ENCODE measurements at regions of chr18 and their contacts with region 1.

Region 1: GRCh38 chr18:32018331-32019250 is at the start of gene RNF125:
- DNase-seq: peak; percentile 75 to 84
- ATAC-seq: peak; percentile 95 to 98 (median 96)
- H3K4me3 ChIP-seq: peak within 1 kb of the TSS; percentile 45 to 86 (median 68)
- H3K27ac ChIP-seq: peak within 1 kb of the TSS; percentile 67 to 89 (median 82)
- H3K4me1 ChIP-seq: peaks cover 0 to 44% (median 16%) of the 10 kb centered on the region in 9 donors
- H3K27me3 ChIP-seq: peaks cover 0 to 5% (median 0%) of the 10 kb centered on the region in 7 donors
- CTCF ChIP-seq: peak in 2 of 9 donors; percentile 10 to 14
- total RNA-seq, gene RNF125: 0.92 to 7.7 (median 2.4) TPM

Region 2: DNA sequence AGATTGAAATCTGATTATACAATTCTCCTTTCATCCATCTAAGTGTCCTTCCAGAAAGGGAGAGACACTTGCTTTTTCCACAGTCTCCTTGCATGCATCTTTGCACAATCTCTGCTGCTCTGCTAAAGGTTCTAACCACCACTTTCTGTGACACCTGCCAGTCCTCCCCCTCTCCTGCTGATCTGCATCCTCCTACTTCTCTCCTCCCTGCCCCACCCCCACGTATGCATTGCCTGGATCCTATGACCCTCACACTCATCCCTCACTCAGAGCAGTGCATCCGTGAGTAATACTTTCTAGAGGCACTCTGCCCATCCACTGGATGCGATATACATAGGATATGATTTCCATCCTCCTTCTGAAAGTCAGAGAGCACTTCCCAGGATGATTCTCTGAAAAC is 48.0 kb before region 1 on chr18:
- intact Hi-C with region 1: no loop called
- DNase-seq: no peak
- ATAC-seq: no peak
- H3K4me3 ChIP-seq: no peak overlapping the region
- H3K27ac ChIP-seq: no peak overlapping the region
- H3K4me1 ChIP-seq: no peaks in the 10 kb centered on the region
- H3K27me3 ChIP-seq: no peaks in the 10 kb centered on the region
- CTCF ChIP-seq: no peak

Region 3: DNA sequence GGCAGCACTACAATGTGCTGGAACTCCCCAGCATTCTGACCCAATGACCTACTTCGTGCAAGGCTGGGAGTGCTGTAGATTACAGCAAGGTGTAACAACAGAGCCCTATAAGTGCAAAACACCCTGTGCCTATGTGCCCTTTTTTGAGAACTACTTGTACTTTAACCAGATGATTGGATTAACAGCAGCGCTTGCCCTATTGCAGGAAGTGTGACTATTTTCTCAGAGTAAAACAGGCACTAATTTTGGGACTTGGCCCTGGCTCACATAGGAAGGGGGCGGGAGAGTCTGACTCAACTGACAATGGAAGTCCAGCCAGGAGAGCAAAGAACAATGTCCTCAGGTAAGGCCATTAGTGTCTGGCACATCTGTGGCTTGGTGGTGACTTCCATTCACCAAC is 35.6 kb before region 1 on chr18:
- intact Hi-C with region 1: loop called in 3 of 10 experiments (anchors 2 to 5 kb)
- DNase-seq: peak in 1 of 2 donors; percentile 11
- ATAC-seq: peak; percentile 67 to 95 (median 88)
- H3K4me3 ChIP-seq: no peak overlapping the region
- H3K27ac ChIP-seq: peak overlapping the region in 8 of 10 donors; percentile 12 to 73 (median 54)
- H3K4me1 ChIP-seq: peaks cover 0 to 30% (median 14%) of the 10 kb centered on the region in 9 donors
- H3K27me3 ChIP-seq: no peaks in the 10 kb centered on the region
- CTCF ChIP-seq: no peak

Region 4: DNA sequence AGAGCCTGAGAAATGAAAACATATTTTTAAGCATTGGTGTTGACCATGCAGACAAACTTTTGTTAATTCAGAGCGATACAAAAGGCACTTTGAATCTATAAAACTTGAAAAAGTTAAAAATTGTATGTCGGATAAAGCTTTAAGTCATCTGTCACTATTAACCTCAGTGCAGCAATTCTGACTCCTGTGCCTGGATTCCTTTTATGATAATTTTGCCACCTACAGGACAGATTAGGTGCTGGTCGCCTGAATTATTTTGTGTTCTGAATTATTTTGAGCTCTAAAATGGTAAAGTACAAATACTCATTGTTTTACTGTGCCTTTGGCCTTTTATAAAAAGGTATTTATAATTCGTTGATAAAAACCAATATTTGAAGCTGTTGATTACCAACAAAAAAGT is 53.7 kb after region 1 on chr18:
- intact Hi-C with region 1: no loop called
- DNase-seq: no peak
- ATAC-seq: no peak
- H3K4me3 ChIP-seq: no peak overlapping the region
- H3K27ac ChIP-seq: no peak overlapping the region
- H3K4me1 ChIP-seq: peaks cover 0 to 2% (median 0%) of the 10 kb centered on the region in 9 donors
- H3K27me3 ChIP-seq: no peaks in the 10 kb centered on the region
- CTCF ChIP-seq: peak in 7 of 9 donors; percentile 16 to 53 (median 34)

Region 5: GRCh38 chr18:32086861-32087260 is 68.3 kb after region 1 on chr18:
- intact Hi-C with region 1: loop called in 4 of 10 experiments (anchors 1 to 10 kb)
- DNase-seq: no peak
- ATAC-seq: no peak
- H3K4me3 ChIP-seq: no peak overlapping the region
- H3K27ac ChIP-seq: peak overlapping the region in 2 of 10 donors; percentile 73 to 91
- H3K4me1 ChIP-seq: peaks cover 0 to 43% (median 24%) of the 10 kb centered on the region in 9 donors
- H3K27me3 ChIP-seq: no peaks in the 10 kb centered on the region
- CTCF ChIP-seq: no peak

Region 6: GRCh38 chr18:32092422-32093101 is 74.0 kb after region 1 on chr18:
- intact Hi-C with region 1: loop called in 3 of 10 experiments (anchors 1 to 10 kb)
- DNase-seq: peak; percentile 99 to 100
- ATAC-seq: peak; percentile 96 to 100 (median 98)
- H3K4me3 ChIP-seq: peak overlapping the region; percentile 49 to 96 (median 84)
- H3K27ac ChIP-seq: peak overlapping the region; percentile 99 to 100 (median 99)
- H3K4me1 ChIP-seq: peaks cover 0 to 49% (median 34%) of the 10 kb centered on the region in 9 donors
- H3K27me3 ChIP-seq: no peaks in the 10 kb centered on the region
- CTCF ChIP-seq: peak in 1 of 9 donors; percentile 20

Measured in heart right ventricle (tissue), 16 donors.